Motor neuron (in vitro differentiated cells): ENCODE measurements at regions of chr5 and their contacts with region 1.

Region 1: DNA sequence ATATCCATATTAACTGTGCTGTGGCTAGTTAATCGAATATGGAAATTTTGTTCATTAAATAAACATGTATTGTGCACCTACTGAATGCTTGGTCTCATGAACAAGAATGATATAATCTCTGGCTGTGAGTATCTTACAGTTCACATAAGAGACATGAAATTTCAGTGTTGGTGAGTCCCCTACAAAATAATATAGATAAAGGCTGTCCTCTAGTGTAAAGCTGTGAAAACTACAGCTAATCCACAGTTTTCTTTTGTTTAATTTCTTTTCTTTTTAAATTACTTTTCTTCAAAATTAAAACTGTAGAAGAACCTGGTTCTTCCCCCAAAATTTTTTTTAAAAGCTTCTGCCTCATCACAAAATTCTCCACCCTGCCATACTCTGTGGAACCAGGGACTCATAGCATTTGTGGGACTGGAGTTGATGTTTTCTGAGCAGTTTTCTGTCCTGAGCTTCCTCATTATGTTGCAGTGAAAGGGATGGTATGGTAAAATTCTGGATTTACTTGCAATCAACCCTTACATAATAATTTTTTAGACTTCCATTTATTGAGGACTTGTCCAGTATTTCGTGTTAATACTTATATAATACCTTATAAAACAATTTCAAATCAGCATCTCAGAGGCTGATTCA is 135.0 kb downstream of the STK32A start:
- ATAC-seq: peak in 2 of 8 experiments; percentile 44 to 51
- H3K4me3 ChIP-seq: no peak overlapping the region
- H3K27ac ChIP-seq: no peak overlapping the region
- H3K4me1 ChIP-seq: no peaks in the 10 kb centered on the region

Region 2: DNA sequence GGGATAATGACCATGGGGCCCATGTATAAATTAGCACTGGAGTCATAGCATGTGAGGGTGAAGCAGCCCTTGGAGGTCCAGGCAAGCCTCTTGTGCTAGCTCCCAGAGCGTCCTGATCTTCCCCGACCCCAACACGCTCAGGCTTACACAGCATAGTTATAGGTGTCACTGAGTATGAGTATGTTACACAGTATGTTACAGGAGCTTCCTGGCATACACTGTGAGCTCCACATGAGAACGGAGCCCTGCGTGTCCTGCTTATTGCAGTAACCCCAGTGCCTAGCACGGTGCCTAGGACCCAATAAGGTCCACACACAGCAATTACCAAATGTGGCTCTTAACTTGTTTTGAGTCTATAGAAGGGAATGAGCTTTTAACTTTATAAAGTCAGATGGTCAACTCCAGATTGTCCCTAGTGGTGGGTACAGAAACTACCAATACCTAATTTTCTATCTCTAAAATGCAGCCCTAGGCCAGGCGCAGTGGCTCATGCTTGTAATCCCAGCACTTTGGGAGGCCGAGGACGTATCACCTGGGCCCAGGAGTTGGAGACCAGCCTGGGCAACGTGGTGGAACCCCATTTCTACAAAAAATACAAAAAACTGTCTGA is 1328.6 kb before region 1 on chr5:
- in situ Hi-C with region 1: no loop called
- ATAC-seq: peak in 3 of 8 experiments; percentile 12 to 59 (median 43)
- H3K4me3 ChIP-seq: no peak overlapping the region
- H3K27ac ChIP-seq: no peak overlapping the region
- H3K4me1 ChIP-seq: no peaks in the 10 kb centered on the region

Region 3: GRCh38 chr5:146533260-146533857 is 836.5 kb before region 1 on chr5:
- in situ Hi-C with region 1: loop called in 2 of 9 experiments (anchors 25 kb)
- ATAC-seq: peak; percentile 69 to 94 (median 81)
- H3K4me3 ChIP-seq: no peak overlapping the region
- H3K27ac ChIP-seq: no peak overlapping the region
- H3K4me1 ChIP-seq: peaks cover 2 to 4% of the 10 kb centered on the region in 2 donors

Region 4: DNA sequence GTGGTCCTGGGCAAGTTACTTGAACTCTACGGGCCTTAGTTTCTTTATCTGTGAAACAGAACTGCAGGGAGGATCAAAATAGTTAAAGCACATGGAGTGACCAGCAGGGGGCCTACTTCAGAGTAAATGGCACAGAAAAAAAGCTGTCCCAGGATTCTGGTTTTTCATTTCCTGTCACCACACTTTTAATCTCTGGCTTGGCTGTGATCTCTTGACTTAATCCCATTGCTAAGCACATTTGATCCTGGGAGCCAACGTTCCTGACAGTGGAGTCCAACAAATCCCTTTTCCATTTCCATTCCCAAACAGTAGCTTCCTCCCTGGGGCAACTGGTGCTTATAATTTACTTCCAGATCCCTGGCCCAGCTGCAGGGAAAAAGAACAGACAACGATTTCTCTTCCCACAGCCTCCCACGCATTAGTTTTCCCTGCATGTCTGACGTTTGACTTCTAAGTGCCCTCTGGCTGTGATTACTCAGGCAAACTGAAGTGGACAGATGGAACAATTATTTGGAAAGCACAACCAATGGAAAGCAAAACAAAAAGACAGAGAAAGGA is 271.5 kb before region 1 on chr5:
- in situ Hi-C with region 1: no loop called
- ATAC-seq: peak in 7 of 8 experiments; percentile 6 to 88 (median 42)
- H3K4me3 ChIP-seq: no peak overlapping the region
- H3K27ac ChIP-seq: peak overlapping the region in 1 of 2 donors; percentile 2
- H3K4me1 ChIP-seq: peaks cover 12 to 18% of the 10 kb centered on the region in 2 donors

Region 5: GRCh38 chr5:147223948-147224791 is 145.7 kb before region 1 on chr5:
- in situ Hi-C with region 1: loop called in 4 of 9 experiments (anchors 10 to 25 kb)
- ATAC-seq: peak in 6 of 8 experiments; percentile 37 to 90 (median 77)
- H3K4me3 ChIP-seq: no peak overlapping the region
- H3K27ac ChIP-seq: no peak overlapping the region
- H3K4me1 ChIP-seq: no peaks in the 10 kb centered on the region

Region 6: GRCh38 chr5:147234825-147235635 is 134.8 kb before region 1 on chr5 and contains the start of gene STK32A:
- in situ Hi-C with region 1: loop called in 3 of 9 experiments (anchors 25 kb)
- ATAC-seq: peak; percentile 91 to 100 (median 99)
- H3K4me3 ChIP-seq: peak within 1 kb of the TSS; percentile 39 to 89 (median 48)
- H3K27ac ChIP-seq: peak within 1 kb of the TSS in 1 of 2 donors; percentile 47
- H3K4me1 ChIP-seq: peaks cover 2 to 6% of the 10 kb centered on the region in 2 donors
- total RNA-seq, gene STK32A: 4.2 to 58.6 (median 26.5) TPM

Region 7: GRCh38 chr5:147805030-147805454 is 435.2 kb after region 1 on chr5:
- in situ Hi-C with region 1: no loop called
- ATAC-seq: peak in 3 of 8 experiments; percentile 67 to 86 (median 82)
- H3K4me3 ChIP-seq: no peak overlapping the region
- H3K27ac ChIP-seq: no peak overlapping the region
- H3K4me1 ChIP-seq: no peaks in the 10 kb centered on the region

Region 8: DNA sequence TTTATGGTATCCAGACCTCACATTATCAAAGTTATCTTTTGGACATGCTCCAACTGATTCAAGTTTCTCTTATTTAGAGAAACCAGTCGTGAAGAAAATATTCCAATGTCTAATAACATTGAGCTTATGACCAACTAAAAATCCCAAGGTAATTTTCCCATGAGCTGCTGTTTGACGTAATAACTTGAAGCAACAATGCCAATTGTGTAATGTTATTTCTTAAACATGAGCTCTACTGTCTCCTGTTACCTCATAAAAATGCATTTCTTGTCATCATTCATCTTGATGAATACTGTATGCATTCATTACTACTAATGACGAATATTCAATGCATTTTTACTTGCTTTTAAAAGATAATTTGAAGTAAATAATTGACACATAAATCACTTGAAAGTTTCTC is 867.9 kb after region 1 on chr5:
- in situ Hi-C with region 1: no loop called
- ATAC-seq: peak in 1 of 8 experiments; percentile 73
- H3K4me3 ChIP-seq: no peak overlapping the region
- H3K27ac ChIP-seq: no peak overlapping the region
- H3K4me1 ChIP-seq: no peaks in the 10 kb centered on the region